MCF 10A (cell line): ENCODE measurements at regions of chr22 and their contacts with region 1.

Region 1: DNA sequence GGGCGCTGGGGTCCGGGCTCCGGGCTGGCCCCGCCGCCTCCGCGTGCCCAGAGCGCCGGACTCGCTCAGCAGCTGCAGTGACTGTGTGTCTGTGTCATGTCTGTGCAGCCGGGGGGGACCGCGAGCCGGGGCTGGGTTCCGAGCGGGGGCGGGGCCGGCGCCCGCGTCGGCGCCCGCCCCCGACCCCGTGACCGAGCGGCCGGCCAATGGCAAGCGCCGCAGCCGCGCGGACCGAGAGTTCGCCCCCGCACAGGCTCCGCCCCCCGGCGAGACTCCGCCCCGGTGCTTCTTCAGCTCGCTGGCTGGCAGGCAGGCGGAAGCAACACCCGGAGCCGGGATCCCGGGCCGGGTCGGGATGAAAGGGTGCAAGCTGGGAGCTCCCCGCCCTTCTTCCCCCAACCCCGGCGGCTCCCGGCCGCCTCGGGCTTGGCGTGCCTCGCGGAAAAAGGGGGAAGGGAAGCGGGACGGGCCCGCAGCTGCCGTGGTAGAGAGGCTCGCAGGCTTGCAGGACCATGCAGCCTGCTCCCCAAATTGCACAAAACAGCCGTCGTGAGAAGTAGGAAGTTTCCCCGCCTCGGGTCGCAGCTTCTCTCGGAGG is 750 bp upstream of the LARGE1 start:
- DNase-seq: peak; percentile 89
- H3K4me3 Mint-ChIP-seq: peak overlapping the region; percentile 88
- H3K27ac Mint-ChIP-seq: peak overlapping the region; percentile 28
- H3K4me1 Mint-ChIP-seq: peaks cover 25% of the 10 kb centered on the region
- H3K27me3 Mint-ChIP-seq: no peaks in the 10 kb centered on the region
- CTCF ChIP-seq: no peak

Region 2: GRCh38 chr22:33519071-33519973 is 401.7 kb before region 1 on chr22:
- CTCF ChIA-PET with region 1: interaction called, 17 read pairs
- POLR2A ChIA-PET with region 1: no interaction called
- intact Hi-C with region 1: loop called (anchors 1 kb)
- DNase-seq: no peak
- H3K4me3 Mint-ChIP-seq: no peak overlapping the region
- H3K27ac Mint-ChIP-seq: no peak overlapping the region
- H3K4me1 Mint-ChIP-seq: no peaks in the 10 kb centered on the region
- H3K27me3 Mint-ChIP-seq: no peaks in the 10 kb centered on the region
- CTCF ChIP-seq: peak; percentile 60

Region 3: GRCh38 chr22:33687464-33687863 is 233.6 kb before region 1 on chr22:
- CTCF ChIA-PET with region 1: no interaction called
- POLR2A ChIA-PET with region 1: no interaction called
- intact Hi-C with region 1: no loop called
- DNase-seq: no peak
- H3K4me3 Mint-ChIP-seq: no peak overlapping the region
- H3K27ac Mint-ChIP-seq: no peak overlapping the region
- H3K4me1 Mint-ChIP-seq: no peaks in the 10 kb centered on the region
- H3K27me3 Mint-ChIP-seq: no peaks in the 10 kb centered on the region
- CTCF ChIP-seq: no peak

Region 4: GRCh38 chr22:33774781-33775180 is 146.2 kb before region 1 on chr22:
- CTCF ChIA-PET with region 1: no interaction called
- POLR2A ChIA-PET with region 1: no interaction called
- intact Hi-C with region 1: loop called (anchors 5 kb)
- DNase-seq: no peak
- H3K4me3 Mint-ChIP-seq: no peak overlapping the region
- H3K27ac Mint-ChIP-seq: no peak overlapping the region
- H3K4me1 Mint-ChIP-seq: no peaks in the 10 kb centered on the region
- H3K27me3 Mint-ChIP-seq: no peaks in the 10 kb centered on the region
- CTCF ChIP-seq: no peak

Region 5: GRCh38 chr22:33841281-33842005 is 79.6 kb before region 1 on chr22:
- CTCF ChIA-PET with region 1: no interaction called
- POLR2A ChIA-PET with region 1: no interaction called
- intact Hi-C with region 1: no loop called
- DNase-seq: no peak
- H3K4me3 Mint-ChIP-seq: no peak overlapping the region
- H3K27ac Mint-ChIP-seq: no peak overlapping the region
- H3K4me1 Mint-ChIP-seq: no peaks in the 10 kb centered on the region
- H3K27me3 Mint-ChIP-seq: no peaks in the 10 kb centered on the region
- CTCF ChIP-seq: no peak

Region 6: GRCh38 chr22:33932997-33933396 is 12.0 kb after region 1 on chr22:
- CTCF ChIA-PET with region 1: interaction called, 10 read pairs
- POLR2A ChIA-PET with region 1: no interaction called
- intact Hi-C with region 1: no loop called
- DNase-seq: no peak
- H3K4me3 Mint-ChIP-seq: no peak overlapping the region
- H3K27ac Mint-ChIP-seq: no peak overlapping the region
- H3K4me1 Mint-ChIP-seq: no peaks in the 10 kb centered on the region
- H3K27me3 Mint-ChIP-seq: peaks cover 14% of the 10 kb centered on the region
- CTCF ChIP-seq: no peak

Region 7: GRCh38 chr22:34111210-34111824 is 190.3 kb after region 1 on chr22:
- CTCF ChIA-PET with region 1: interaction called, 26 read pairs
- POLR2A ChIA-PET with region 1: interaction called, 3 read pairs
- intact Hi-C with region 1: no loop called
- DNase-seq: peak; percentile 0
- H3K4me3 Mint-ChIP-seq: no peak overlapping the region
- H3K27ac Mint-ChIP-seq: no peak overlapping the region
- H3K4me1 Mint-ChIP-seq: no peaks in the 10 kb centered on the region
- H3K27me3 Mint-ChIP-seq: no peaks in the 10 kb centered on the region
- CTCF ChIP-seq: peak; percentile 42